Esophagus muscularis mucosa (tissue), 4 donors: ENCODE measurements at regions of chr14 and their contacts with region 1.

Region 1: DNA sequence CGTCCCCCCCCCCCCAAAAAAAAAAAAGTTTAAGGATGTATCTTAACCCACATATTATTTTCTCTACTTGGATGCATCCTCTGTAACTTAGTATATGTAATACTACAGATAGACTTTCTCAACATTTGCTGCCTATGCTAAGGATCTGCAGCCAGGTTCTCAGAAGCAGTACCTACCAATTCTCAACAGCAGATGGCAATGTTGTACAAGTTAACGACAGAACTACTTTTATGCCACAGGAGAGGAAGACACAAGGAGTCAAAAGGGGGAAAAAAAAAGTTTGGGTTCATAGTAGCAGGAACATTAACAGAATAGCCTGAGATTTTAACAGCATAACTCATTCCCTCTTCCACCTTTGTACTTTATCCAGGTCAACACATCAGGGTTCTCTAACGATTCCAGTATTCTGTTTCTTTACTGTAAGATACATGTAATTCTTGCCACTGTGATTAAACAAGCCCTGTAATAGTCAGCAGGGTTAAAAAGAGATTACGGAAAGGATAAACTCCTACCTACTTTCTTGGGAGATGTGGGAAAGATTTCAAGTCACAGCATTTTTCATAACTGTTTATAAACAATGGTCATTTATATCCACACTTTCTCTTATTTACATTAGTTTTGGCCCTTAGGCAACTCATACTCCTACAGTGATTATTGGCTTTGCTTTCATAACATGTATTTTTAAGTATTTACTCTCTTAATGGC is 5.7 kb upstream of the NEK9 start:
- DNase-seq: no peak
- H3K4me3 ChIP-seq: no peak overlapping the region
- H3K27ac ChIP-seq: peak overlapping the region; percentile 1 to 43 (median 23)
- H3K4me1 ChIP-seq: peaks cover 9 to 23% (median 17%) of the 10 kb centered on the region in 4 donors
- H3K27me3 ChIP-seq: no peaks in the 10 kb centered on the region
- CTCF ChIP-seq: peak; percentile 73 to 93 (median 78)
- EP300 ChIP-seq: no peak
- POLR2A ChIP-seq: no peak

Region 2: GRCh38 chr14:75025082-75025481 is 107.5 kb before region 1 on chr14:
- intact Hi-C with region 1: no loop called
- DNase-seq: no peak
- H3K4me3 ChIP-seq: no peak overlapping the region
- H3K27ac ChIP-seq: no peak overlapping the region
- H3K4me1 ChIP-seq: no peaks in the 10 kb centered on the region
- H3K27me3 ChIP-seq: no peaks in the 10 kb centered on the region
- CTCF ChIP-seq: no peak
- EP300 ChIP-seq: no peak
- POLR2A ChIP-seq: no peak

Region 3: GRCh38 chr14:75170772-75171171 is 38.2 kb after region 1 on chr14:
- intact Hi-C with region 1: loop called (anchors 5 kb)
- DNase-seq: no peak
- H3K4me3 ChIP-seq: no peak overlapping the region
- H3K27ac ChIP-seq: no peak overlapping the region
- H3K4me1 ChIP-seq: peaks cover 53 to 90% (median 83%) of the 10 kb centered on the region in 4 donors
- H3K27me3 ChIP-seq: no peaks in the 10 kb centered on the region
- CTCF ChIP-seq: no peak
- EP300 ChIP-seq: no peak
- POLR2A ChIP-seq: no peak

Region 4: DNA sequence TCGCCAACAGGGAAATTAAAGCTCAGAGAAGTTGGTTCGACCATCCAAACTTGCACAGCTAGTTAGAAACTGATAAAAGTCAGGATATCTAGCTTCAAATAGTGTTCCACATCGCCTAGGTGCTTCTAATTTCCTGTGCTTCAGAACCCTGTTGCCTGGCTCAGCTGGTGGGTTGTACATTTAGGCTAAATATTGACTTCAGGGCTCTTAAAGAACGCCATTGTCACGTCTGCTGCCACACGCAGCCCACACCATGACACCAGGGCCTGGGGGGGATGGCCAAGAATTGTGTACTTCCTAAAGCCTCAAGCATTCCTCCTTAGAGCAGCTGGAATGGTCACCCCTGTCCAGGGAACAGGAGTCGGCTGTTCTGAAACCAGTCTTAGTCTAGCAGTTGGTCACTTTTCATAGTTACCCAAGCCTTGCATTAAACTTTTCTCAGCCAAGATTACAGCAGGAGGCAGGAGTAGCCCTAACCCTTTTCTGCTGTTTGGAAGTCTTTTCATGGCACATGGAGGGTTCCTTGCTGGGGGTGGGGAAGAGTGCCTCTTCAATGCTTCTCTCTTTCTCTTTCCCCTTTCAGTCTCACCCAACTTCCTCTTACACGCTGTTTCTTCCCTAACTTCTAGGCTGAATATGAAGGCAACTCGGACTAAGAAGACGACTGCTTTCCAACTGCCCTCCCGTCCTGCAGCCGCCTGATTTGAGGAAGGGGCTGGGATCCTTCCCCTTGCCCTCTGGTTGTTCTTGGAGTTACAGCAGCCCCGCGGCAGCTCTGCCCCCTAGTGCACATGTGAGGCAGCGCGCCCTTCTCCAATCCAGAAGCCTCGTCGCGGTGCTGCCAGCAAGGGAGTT is 163.2 kb after region 1 on chr14:
- intact Hi-C with region 1: loop called (anchors 1 kb)
- DNase-seq: peak; percentile 96
- H3K4me3 ChIP-seq: peak overlapping the region; percentile 65 to 71 (median 67)
- H3K27ac ChIP-seq: peak overlapping the region; percentile 94 to 96 (median 96)
- H3K4me1 ChIP-seq: peaks cover 21 to 43% (median 32%) of the 10 kb centered on the region in 4 donors
- H3K27me3 ChIP-seq: no peaks in the 10 kb centered on the region
- CTCF ChIP-seq: peak; percentile 99
- EP300 ChIP-seq: no peak
- POLR2A ChIP-seq: peak; percentile 13

Region 5: GRCh38 chr14:75307700-75308379 is 175.3 kb after region 1 on chr14:
- intact Hi-C with region 1: loop called (anchors 1 kb)
- DNase-seq: no peak
- H3K4me3 ChIP-seq: no peak overlapping the region
- H3K27ac ChIP-seq: no peak overlapping the region
- H3K4me1 ChIP-seq: peaks cover 25 to 35% (median 33%) of the 10 kb centered on the region in 4 donors
- H3K27me3 ChIP-seq: no peaks in the 10 kb centered on the region
- CTCF ChIP-seq: peak; percentile 92 to 94 (median 93)
- EP300 ChIP-seq: no peak
- POLR2A ChIP-seq: no peak

Region 6: DNA sequence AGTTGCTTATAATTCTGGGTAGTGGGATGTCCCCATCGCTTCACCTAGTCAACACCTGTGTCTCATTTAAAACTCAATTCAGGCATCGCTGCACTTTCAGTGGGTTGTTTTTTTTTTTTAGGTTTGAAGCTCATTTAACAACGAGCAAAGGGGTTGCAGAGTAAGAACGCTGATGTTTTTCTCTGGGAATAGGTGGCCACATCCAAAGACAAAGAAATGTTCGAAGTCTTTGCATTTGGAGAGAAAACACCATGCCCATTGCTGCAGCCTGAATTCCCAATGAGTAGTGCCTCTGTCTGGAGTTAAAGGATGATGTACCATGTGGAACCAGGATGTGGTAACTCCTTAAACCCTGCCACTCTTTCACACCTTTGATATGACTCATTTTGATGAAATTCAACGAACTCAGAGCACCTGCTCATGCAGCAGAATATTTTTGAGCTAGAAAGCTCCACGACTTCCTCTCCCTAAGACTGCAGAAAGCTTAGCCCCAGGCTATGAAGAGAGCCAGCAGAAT is 354.7 kb after region 1 on chr14:
- intact Hi-C with region 1: loop called (anchors 5 kb)
- DNase-seq: peak; percentile 53
- H3K4me3 ChIP-seq: no peak overlapping the region
- H3K27ac ChIP-seq: no peak overlapping the region
- H3K4me1 ChIP-seq: peaks cover 0 to 7% (median 0%) of the 10 kb centered on the region in 4 donors
- H3K27me3 ChIP-seq: no peaks in the 10 kb centered on the region
- CTCF ChIP-seq: no peak
- EP300 ChIP-seq: no peak
- POLR2A ChIP-seq: no peak